AG04449 (cell line): ENCODE measurements at regions of chr20 and their contacts with region 1.

Region 1: GRCh38 chr20:9616833-9617489 is 102.6 kb downstream of the LAMP5 start:
- DNase-seq: peak; percentile 10
- H3K4me3 ChIP-seq: no peak overlapping the region
- CTCF ChIP-seq: peak; percentile 67

Region 2: GRCh38 chr20:9262653-9263194 is 354.2 kb before region 1 on chr20:
- CTCF ChIA-PET with region 1: no interaction called
- POLR2A ChIA-PET with region 1: no interaction called
- DNase-seq: no peak
- H3K4me3 ChIP-seq: no peak overlapping the region; the same call in 1 of the 2 replicates
- CTCF ChIP-seq: no peak

Region 3: DNA sequence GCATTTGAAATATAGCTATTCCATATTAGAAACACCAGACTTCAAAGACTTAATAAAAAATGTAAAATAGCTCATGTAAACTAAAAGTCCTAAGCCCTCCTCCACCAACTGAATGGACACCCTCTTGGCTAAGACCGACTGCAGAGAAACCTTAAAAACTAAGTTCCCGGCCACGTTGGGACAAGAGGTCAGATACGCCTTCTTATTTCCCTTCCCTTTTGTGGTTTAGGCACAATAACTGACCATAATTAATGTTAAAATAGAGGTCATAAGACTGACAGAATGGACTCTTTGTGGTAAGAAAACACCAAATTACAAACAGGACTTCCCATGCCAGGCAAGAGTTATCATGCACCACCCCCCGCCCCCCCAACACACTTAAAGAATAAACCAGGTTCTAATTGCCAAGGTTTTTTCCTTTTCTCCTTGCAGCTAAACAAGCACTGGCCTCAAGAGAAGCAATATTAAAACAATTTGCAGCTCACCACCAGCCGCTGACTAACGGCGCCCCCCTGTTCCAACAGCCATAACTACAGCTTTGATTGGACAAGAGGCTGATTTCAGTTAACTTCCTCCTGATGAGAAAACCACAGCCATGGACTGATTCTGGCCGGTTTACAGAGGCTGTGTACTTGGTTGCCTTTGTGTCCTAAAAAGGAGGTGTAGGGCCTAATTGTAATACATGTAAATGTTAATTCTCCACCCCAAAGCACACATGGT is 113.3 kb before region 1 on chr20:
- CTCF ChIA-PET with region 1: no interaction called
- POLR2A ChIA-PET with region 1: no interaction called
- DNase-seq: no peak
- H3K4me3 ChIP-seq: no peak overlapping the region
- CTCF ChIP-seq: peak; percentile 21

Region 4: GRCh38 chr20:9912858-9913434 is 296.0 kb after region 1 on chr20:
- CTCF ChIA-PET with region 1: interaction called, 226 read pairs
- POLR2A ChIA-PET with region 1: no interaction called
- DNase-seq: peak; percentile 3
- H3K4me3 ChIP-seq: no peak overlapping the region
- CTCF ChIP-seq: peak; percentile 71

Region 5: DNA sequence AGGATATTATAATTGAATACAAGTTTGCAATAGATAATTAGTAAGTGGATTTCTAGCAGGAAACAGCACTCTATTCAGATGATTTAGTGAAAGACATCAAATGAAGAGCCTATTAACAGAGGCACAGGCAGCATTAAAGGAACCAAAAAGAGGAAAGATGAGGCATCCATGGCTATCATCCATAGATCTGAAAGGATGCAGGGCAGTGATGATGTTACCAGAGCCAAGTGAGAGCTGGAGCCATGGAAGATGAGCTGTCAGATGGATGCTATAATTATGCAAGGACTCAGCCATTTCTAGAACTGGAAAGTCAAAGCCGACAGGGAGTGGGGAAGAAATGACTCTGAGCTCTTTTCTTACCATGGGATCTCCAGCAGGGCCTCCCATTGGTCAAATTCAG is 351.1 kb after region 1 on chr20:
- CTCF ChIA-PET with region 1: interaction called, 11 read pairs
- POLR2A ChIA-PET with region 1: no interaction called
- DNase-seq: no peak
- H3K4me3 ChIP-seq: no peak overlapping the region
- CTCF ChIP-seq: no peak

Region 6: DNA sequence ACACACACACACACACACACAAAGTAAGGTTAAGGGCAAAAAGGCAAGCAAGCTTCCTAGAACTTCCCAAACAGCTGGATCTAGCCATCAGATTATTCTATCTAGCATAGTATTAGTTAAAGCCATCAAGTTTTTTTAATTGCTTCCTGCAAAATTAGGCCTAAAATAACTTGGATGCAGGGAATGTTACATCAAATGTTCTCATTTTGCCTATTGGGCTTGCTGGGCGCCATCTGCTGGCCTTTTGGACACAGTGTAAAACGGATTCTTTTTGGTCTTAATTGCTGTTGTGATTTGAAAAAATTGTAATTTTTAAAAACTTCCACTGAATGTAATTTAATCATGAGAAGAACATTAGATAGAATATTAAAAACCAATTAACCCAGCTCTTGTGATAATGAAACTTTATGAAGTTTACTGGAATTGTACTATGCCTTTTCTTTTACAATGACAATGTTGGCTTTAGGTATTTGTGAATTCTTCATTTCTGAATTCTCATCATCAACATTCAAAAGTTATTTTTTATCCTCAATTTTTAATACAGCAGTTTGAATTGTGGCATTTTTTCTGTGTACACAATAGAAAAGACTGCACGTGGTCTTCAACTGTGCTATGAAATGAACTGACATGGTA is 810.2 kb after region 1 on chr20:
- CTCF ChIA-PET with region 1: interaction called, 17 read pairs
- POLR2A ChIA-PET with region 1: no interaction called
- DNase-seq: no peak
- H3K4me3 ChIP-seq: no peak overlapping the region
- CTCF ChIP-seq: peak; percentile 68